Stomach (tissue), 19 donors: ENCODE measurements at regions of chr6 and their contacts with region 1.

Region 1: GRCh38 chr6:31267651-31268368 is 4.1 kb downstream of the HLA-C start:
- DNase-seq: no peak
- H3K4me3 ChIP-seq: no peak overlapping the region
- H3K27ac ChIP-seq: no peak overlapping the region
- H3K4me1 ChIP-seq: peaks cover 0 to 19% (median 8%) of the 10 kb centered on the region in 4 donors
- H3K27me3 ChIP-seq: no peaks in the 10 kb centered on the region
- CTCF ChIP-seq: no peak
- EP300 ChIP-seq: no peak
- POLR2A ChIP-seq: no peak

Region 2: GRCh38 chr6:31203345-31203979 is 64.3 kb before region 1 on chr6:
- intact Hi-C with region 1: loop called (anchors 10 kb)
- DNase-seq: peak in 1 of 2 donors; percentile 85
- H3K4me3 ChIP-seq: peak overlapping the region; percentile 37 to 47 (median 40)
- H3K27ac ChIP-seq: peak overlapping the region; percentile 87 to 95 (median 90)
- H3K4me1 ChIP-seq: peaks cover 17 to 63% (median 36%) of the 10 kb centered on the region in 4 donors
- H3K27me3 ChIP-seq: no peaks in the 10 kb centered on the region
- CTCF ChIP-seq: no peak
- EP300 ChIP-seq: no peak
- POLR2A ChIP-seq: no peak

Region 3: DNA sequence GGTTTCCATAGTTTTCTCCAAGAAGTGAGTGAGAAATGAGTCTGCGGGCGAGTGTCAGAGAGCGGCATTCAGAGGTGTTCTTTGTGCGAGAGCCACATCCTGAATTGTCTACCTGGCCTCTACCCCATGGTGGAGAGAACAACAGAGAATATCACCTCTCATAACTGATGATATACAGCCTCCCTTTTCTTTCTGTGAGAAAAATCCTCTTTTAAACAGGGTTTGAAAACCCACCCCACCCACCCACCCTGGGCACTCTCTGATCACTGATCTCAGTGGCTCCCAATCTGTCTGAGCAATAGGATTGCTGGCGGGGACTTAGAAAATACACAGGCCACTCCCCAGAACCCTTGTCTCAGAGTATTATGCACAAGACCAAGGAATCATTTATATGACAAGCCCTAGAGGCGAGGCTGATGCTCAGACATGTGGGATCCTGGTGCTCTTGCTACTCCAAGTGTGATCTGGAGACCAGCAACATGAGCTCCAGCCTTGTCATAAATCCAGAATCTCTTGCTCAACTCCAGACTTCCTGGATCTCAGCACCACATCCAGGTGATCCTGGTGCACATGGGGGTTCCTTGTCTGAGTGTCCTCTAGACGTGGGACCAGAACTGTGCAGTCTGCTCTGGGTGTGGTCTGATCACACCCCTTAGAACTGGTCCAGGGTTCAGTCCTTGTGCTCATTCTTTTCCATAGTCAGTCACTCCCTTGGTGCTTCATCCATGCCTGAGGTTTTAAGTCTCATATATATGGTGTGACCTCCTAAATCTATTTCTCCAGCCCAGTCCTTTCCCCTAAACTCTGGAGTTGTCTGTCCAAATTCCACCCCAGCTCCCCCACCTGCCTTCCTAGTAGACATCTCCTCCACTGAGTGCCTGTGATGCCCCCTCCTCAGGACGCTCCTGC is 83.8 kb after region 1 on chr6:
- intact Hi-C with region 1: loop called (anchors 5 kb)
- DNase-seq: no peak
- H3K4me3 ChIP-seq: no peak overlapping the region
- H3K27ac ChIP-seq: no peak overlapping the region
- H3K4me1 ChIP-seq: peaks cover 6 to 29% (median 16%) of the 10 kb centered on the region in 4 donors
- H3K27me3 ChIP-seq: no peaks in the 10 kb centered on the region
- CTCF ChIP-seq: no peak
- EP300 ChIP-seq: no peak
- POLR2A ChIP-seq: no peak